Activated CD8-positive, alpha-beta T cell treated with anti-CD3 and anti-CD28 coated beads for 36 hours (primary cell): ENCODE measurements at regions of chr6 and their contacts with region 1.

Region 1: GRCh38 chr6:159789377-159790148 is at the start of gene TCP1:
- DNase-seq: peak; percentile 100
- ATAC-seq: peak; percentile 87
- H3K4me3 Mint-ChIP-seq: peak within 1 kb of the TSS; percentile 98
- H3K27ac Mint-ChIP-seq: peak within 1 kb of the TSS; percentile 99
- H3K4me1 Mint-ChIP-seq: peaks cover 58% of the 10 kb centered on the region
- H3K27me3 Mint-ChIP-seq: no peaks in the 10 kb centered on the region
- CTCF ChIP-seq: no peak
- total RNA-seq, gene TCP1: 446 to 452 TPM

Region 2: GRCh38 chr6:159720708-159721107 is 68.9 kb before region 1 on chr6:
- CTCF ChIA-PET with region 1: interaction called, 14 read pairs
- POLR2A ChIA-PET with region 1: interaction called, 38 read pairs
- intact Hi-C with region 1: no loop called
- DNase-seq: peak; percentile 60
- ATAC-seq: peak; percentile 69
- H3K4me3 Mint-ChIP-seq: no peak overlapping the region
- H3K27ac Mint-ChIP-seq: no peak overlapping the region
- H3K4me1 Mint-ChIP-seq: peaks cover 16% of the 10 kb centered on the region
- H3K27me3 Mint-ChIP-seq: no peaks in the 10 kb centered on the region
- CTCF ChIP-seq: peak; percentile 54

Region 3: GRCh38 chr6:159761873-159762680 is 27.5 kb before region 1 on chr6 and contains the start of gene ACAT2:
- CTCF ChIA-PET with region 1: interaction called, 4 read pairs
- POLR2A ChIA-PET with region 1: interaction called, 39 read pairs
- intact Hi-C with region 1: loop called (anchors 1 kb)
- DNase-seq: peak; percentile 96
- ATAC-seq: peak; percentile 95
- H3K4me3 Mint-ChIP-seq: peak within 1 kb of the TSS; percentile 97
- H3K27ac Mint-ChIP-seq: peak within 1 kb of the TSS; percentile 98
- H3K4me1 Mint-ChIP-seq: peaks cover 29% of the 10 kb centered on the region
- H3K27me3 Mint-ChIP-seq: no peaks in the 10 kb centered on the region
- CTCF ChIP-seq: no peak
- total RNA-seq, gene ACAT2: 70.8 to 74.1 TPM

Region 4: DNA sequence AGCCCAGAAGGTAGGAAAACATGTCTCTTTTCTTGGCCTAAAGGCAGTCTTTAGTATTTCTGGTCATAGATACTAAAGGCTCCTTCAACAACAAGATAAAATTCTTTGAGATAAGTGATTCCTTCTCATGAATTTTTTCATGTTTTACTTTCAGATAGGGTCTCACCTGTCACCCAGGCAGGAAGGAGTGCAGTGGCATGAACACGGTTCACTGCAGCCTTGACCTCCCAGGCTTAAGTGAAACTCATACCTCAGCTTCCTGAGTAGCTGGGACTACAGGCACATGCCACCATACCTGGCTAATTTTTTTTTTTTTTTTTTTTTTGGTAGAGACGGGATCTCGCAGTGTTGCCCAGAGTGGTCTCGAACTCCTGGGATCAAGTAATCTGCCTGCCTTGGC is 19.6 kb after region 1 on chr6:
- CTCF ChIA-PET with region 1: no interaction called
- POLR2A ChIA-PET with region 1: no interaction called
- intact Hi-C with region 1: no loop called
- DNase-seq: no peak
- ATAC-seq: no peak
- H3K4me3 Mint-ChIP-seq: no peak overlapping the region
- H3K27ac Mint-ChIP-seq: no peak overlapping the region
- H3K4me1 Mint-ChIP-seq: no peaks in the 10 kb centered on the region
- H3K27me3 Mint-ChIP-seq: no peaks in the 10 kb centered on the region
- CTCF ChIP-seq: no peak

Region 5: DNA sequence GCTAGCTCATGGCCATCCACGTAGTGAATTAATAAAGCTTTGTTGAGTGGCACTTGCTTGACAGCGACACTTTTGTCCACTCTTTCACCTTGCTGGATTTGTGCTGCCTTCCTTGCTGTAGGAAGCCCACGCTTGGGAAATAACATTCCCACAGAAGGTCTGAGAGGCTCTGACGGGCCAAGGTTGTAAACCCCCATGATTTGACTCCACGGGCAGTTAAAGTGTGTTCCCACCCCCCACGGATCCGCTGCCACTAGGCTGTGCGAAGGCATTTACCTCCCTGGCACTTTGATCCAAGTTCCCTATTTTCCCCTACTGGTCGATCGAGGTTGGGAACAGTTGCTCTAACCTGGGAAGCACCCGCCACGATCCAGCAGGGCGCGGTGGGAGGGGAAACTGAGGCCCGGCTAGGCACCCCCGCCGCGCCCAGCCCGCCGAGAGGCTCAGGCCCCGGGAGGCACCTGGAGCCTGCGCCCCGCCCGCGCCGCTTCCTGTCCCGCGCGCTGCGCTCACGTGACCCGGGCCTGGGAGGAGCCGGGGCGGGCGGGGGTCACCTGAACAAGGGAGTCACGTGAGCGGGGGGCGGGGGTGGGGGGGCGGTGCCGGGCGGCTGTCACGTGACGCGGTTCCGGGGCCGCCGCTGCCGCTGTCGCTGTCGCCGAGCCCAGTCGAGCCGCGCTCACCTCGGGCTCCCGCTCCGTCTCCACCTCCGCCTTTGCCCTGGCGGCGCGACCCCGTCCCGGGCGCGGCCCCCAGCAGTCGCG is 179.1 kb after region 1 on chr6 and contains the start of gene IGF2R:
- CTCF ChIA-PET with region 1: no interaction called
- POLR2A ChIA-PET with region 1: interaction called, 11 read pairs
- intact Hi-C with region 1: no loop called
- DNase-seq: peak; percentile 96
- ATAC-seq: peak; percentile 92
- H3K4me3 Mint-ChIP-seq: peak within 1 kb of the TSS; percentile 93
- H3K27ac Mint-ChIP-seq: peak within 1 kb of the TSS; percentile 93
- H3K4me1 Mint-ChIP-seq: peaks cover 35% of the 10 kb centered on the region
- H3K27me3 Mint-ChIP-seq: no peaks in the 10 kb centered on the region
- CTCF ChIP-seq: no peak
- total RNA-seq, gene IGF2R: 81.7 to 82.4 TPM